ENCODE measurements at regions of chr1 and their contacts with region 1.

Region 1: GRCh38 chr1:244801246-244801645 is 34.2 kb upstream of the COX20 start:
- DNase-seq: peak; percentile 9 to 77 (median 43)
- ATAC-seq: peak; percentile 82 to 93 (median 89)
- H3K4me3 ChIP-seq: no peak overlapping the region
- H3K4me3 Mint-ChIP-seq: no peak overlapping the region
- H3K27ac ChIP-seq: no peak overlapping the region
- H3K27ac Mint-ChIP-seq: no peak overlapping the region
- H3K4me1 ChIP-seq: peaks cover 0 to 6% of the 10 kb centered on the region in 2 experiments
- H3K4me1 Mint-ChIP-seq: peaks cover 2 to 8% (median 3%) of the 10 kb centered on the region in 3 donors
- H3K27me3 ChIP-seq: peaks cover 0 to 7% of the 10 kb centered on the region in 2 experiments
- H3K27me3 Mint-ChIP-seq: no peaks in the 10 kb centered on the region

Region 2: GRCh38 chr1:244599937-244600350 is 201.3 kb before region 1 on chr1:
- CTCF ChIA-PET with region 1: interaction called, 45 to 51 read pairs
- POLR2A ChIA-PET with region 1: no interaction called
- DNase-seq: peak in 15 of 35 experiments; percentile 1 to 42 (median 9)
- ATAC-seq: peak; percentile 90 to 97 (median 94)
- H3K4me3 ChIP-seq: no peak overlapping the region
- H3K4me3 Mint-ChIP-seq: peak overlapping the region in 2 of 3 donors; percentile 56 to 78
- H3K27ac ChIP-seq: no peak overlapping the region
- H3K27ac Mint-ChIP-seq: peak overlapping the region; percentile 94 to 97
- H3K4me1 ChIP-seq: no peaks in the 10 kb centered on the region
- H3K4me1 Mint-ChIP-seq: peaks cover 0 to 14% (median 12%) of the 10 kb centered on the region in 3 donors
- H3K27me3 ChIP-seq: no peaks in the 10 kb centered on the region
- H3K27me3 Mint-ChIP-seq: peaks cover 0 to 10% of the 10 kb centered on the region in 2 donors

Region 3: GRCh38 chr1:244778361-244778760 is 22.9 kb before region 1 on chr1:
- CTCF ChIA-PET with region 1: no interaction called
- POLR2A ChIA-PET with region 1: no interaction called
- DNase-seq: no peak
- ATAC-seq: no peak
- H3K4me3 ChIP-seq: no peak overlapping the region
- H3K4me3 Mint-ChIP-seq: no peak overlapping the region
- H3K27ac ChIP-seq: no peak overlapping the region
- H3K27ac Mint-ChIP-seq: no peak overlapping the region
- H3K4me1 ChIP-seq: no peaks in the 10 kb centered on the region
- H3K4me1 Mint-ChIP-seq: no peaks in the 10 kb centered on the region
- H3K27me3 ChIP-seq: peaks cover 0 to 3% of the 10 kb centered on the region in 2 experiments
- H3K27me3 Mint-ChIP-seq: no peaks in the 10 kb centered on the region